ENCODE measurements at regions of chr11 and their contacts with region 1.

Region 1: GRCh38 chr11:112665291-112665690 is 295.9 kb upstream of the NCAM1 start:
- DNase-seq: no peak
- H3K4me3 ChIP-seq: no peak overlapping the region
- CTCF ChIP-seq: no peak

Region 2: DNA sequence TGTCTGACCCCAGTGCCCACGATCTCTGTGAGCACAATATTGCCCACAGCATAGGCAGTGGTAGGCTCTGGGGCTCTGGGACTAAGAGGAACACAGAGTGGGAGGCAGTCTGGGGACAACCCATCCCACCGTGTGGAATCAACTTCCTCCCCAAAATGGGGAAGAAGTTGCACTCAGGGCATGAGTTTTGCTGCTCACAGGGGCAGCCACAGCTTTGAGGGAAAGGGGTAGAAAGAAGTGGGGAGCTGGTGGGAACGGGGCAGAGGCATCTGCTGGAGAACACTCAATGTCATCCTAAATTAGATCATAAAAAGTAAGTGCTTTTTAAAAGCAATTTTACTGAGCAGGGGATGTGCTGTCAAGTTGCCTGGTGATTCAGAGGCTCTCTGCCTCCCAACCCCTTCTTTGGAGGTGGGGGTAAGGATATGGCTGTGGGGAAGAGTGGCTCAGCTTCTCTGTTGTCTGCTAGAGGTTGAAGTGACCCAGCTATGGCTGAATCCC is 62.1 kb after region 1 on chr11:
- in situ Hi-C with region 1: loop called (anchors 5 kb)
- DNase-seq: no peak
- H3K4me3 ChIP-seq: no peak overlapping the region
- CTCF ChIP-seq: no peak

Measured in astrocyte of the cerebellum (primary cell).